MCF 10A (cell line): ENCODE measurements at regions of chr18 and their contacts with region 1.

Region 1: DNA sequence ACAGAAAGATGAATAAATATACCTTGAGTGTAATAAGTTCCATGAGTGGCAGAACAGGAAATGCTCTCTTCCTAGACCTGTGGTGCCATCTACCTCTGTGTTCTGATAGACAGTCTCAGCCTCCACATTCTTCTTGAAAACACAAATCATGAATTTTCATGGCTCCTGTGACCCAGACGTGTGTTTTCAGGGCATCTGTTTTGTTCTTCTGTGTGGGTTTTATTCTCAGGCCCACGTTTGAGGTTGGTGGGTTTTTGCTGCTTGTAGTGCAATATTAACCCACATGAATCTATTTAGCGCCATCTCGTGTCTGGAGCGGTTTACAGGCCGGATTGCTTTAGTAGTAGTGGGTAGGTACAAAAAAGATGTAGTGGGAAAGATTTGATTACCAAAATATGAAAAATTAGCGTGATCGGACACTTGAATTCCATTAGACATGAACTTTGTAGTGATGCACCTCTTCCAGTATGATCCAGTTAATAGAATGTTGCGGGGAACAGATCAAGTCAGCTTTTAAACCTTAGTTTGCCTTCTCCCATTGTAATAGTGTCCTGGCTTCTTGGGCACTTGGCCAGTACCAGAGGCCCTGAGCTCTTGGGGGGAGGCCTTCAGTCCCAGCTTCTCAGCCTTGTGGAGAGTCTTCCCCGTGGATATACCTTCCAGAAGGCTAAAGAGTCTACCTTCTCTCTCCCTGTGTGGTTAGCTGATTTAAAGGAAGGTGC is 256.5 kb downstream of the TPGS2 start:
- DNase-seq: peak; percentile 69
- H3K4me3 Mint-ChIP-seq: no peak overlapping the region
- H3K27ac Mint-ChIP-seq: no peak overlapping the region
- H3K4me1 Mint-ChIP-seq: peaks cover 9% of the 10 kb centered on the region
- H3K27me3 Mint-ChIP-seq: no peaks in the 10 kb centered on the region
- CTCF ChIP-seq: peak; percentile 70

Region 2: DNA sequence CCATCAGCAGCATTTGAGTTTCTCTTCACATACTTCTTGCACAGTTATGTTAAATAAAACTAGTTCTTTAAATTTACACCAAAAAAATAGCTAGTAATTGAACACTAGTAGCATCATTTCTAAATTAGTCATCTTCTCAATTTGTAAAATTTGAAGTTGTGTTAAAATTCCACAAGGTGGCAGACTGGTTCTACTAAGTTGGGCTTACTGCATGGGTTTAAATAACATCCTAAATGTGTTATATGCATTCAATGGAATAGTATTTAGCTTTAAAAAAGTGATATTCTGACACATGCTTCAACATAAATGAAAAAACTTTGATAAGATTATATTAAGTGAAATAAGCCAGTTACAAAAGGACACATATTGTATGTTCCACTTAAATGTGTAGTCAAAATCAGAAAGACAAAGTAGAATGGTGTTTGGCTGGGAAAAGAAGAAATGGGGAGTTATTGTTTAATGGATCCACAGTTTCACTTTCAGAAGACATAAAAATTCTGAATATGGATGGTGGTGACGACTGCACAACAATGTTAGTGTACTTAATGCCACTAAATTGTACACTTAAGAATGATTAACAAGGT is 476.3 kb before region 1 on chr18:
- CTCF ChIA-PET with region 1: interaction called, 8 read pairs
- POLR2A ChIA-PET with region 1: no interaction called
- intact Hi-C with region 1: loop called (anchors 1 kb)
- DNase-seq: peak; percentile 64
- H3K4me3 Mint-ChIP-seq: no peak overlapping the region
- H3K27ac Mint-ChIP-seq: no peak overlapping the region
- H3K4me1 Mint-ChIP-seq: no peaks in the 10 kb centered on the region
- H3K27me3 Mint-ChIP-seq: no peaks in the 10 kb centered on the region
- CTCF ChIP-seq: peak; percentile 59

Region 3: GRCh38 chr18:36296650-36297416 is 275.5 kb before region 1 on chr18:
- CTCF ChIA-PET with region 1: interaction called, 19 read pairs
- POLR2A ChIA-PET with region 1: interaction called, 4 read pairs
- intact Hi-C with region 1: loop called (anchors 1 kb)
- DNase-seq: peak; percentile 71
- H3K4me3 Mint-ChIP-seq: no peak overlapping the region
- H3K27ac Mint-ChIP-seq: no peak overlapping the region
- H3K4me1 Mint-ChIP-seq: no peaks in the 10 kb centered on the region
- H3K27me3 Mint-ChIP-seq: no peaks in the 10 kb centered on the region
- CTCF ChIP-seq: peak; percentile 30

Region 4: GRCh38 chr18:36309436-36310391 is 262.6 kb before region 1 on chr18:
- CTCF ChIA-PET with region 1: interaction called, 14 read pairs
- POLR2A ChIA-PET with region 1: no interaction called
- intact Hi-C with region 1: no loop called
- DNase-seq: peak; percentile 98
- H3K4me3 Mint-ChIP-seq: peak overlapping the region; percentile 60
- H3K27ac Mint-ChIP-seq: peak overlapping the region; percentile 86
- H3K4me1 Mint-ChIP-seq: peaks cover 77% of the 10 kb centered on the region
- H3K27me3 Mint-ChIP-seq: no peaks in the 10 kb centered on the region
- CTCF ChIP-seq: no peak

Region 5: GRCh38 chr18:36519358-36519757 is 52.9 kb before region 1 on chr18:
- CTCF ChIA-PET with region 1: no interaction called
- POLR2A ChIA-PET with region 1: no interaction called
- intact Hi-C with region 1: no loop called
- DNase-seq: peak; percentile 15
- H3K4me3 Mint-ChIP-seq: no peak overlapping the region
- H3K27ac Mint-ChIP-seq: no peak overlapping the region
- H3K4me1 Mint-ChIP-seq: no peaks in the 10 kb centered on the region
- H3K27me3 Mint-ChIP-seq: no peaks in the 10 kb centered on the region
- CTCF ChIP-seq: no peak

Region 6: DNA sequence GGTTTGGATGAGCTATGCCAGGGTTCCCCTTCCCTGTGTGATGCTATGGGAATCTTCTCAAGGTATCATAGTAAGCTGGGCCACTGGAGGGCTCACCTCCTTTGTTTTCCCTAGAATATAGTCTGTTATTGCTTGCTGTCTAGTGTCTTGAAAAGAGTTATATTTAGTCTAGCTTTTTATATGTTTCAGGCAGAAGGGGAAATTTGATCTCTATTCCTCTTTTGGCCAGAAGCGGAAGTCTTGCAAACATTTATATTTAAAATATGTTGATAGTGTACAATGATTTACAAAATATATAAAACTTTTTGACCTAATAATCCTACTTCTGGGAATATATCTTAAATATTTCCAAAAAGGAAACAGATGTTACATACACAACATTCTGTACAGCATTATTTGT is 14.1 kb before region 1 on chr18:
- CTCF ChIA-PET with region 1: interaction called, 50 read pairs
- POLR2A ChIA-PET with region 1: interaction called, 3 read pairs
- intact Hi-C with region 1: no loop called
- DNase-seq: no peak
- H3K4me3 Mint-ChIP-seq: no peak overlapping the region
- H3K27ac Mint-ChIP-seq: no peak overlapping the region
- H3K4me1 Mint-ChIP-seq: no peaks in the 10 kb centered on the region
- H3K27me3 Mint-ChIP-seq: no peaks in the 10 kb centered on the region
- CTCF ChIP-seq: no peak